OCI-LY7 (cell line): ENCODE measurements at regions of chr13 and their contacts with region 1.

Region 1: GRCh38 chr13:33542283-33543088 is 256.9 kb upstream of the STARD13 start:
- DNase-seq: peak; percentile 98
- H3K4me3 ChIP-seq: peak overlapping the region; percentile 80
- H3K27ac ChIP-seq: peak overlapping the region; percentile 98
- H3K4me1 ChIP-seq: peaks cover 58% of the 10 kb centered on the region
- CTCF ChIP-seq: peak; percentile 83

Region 2: DNA sequence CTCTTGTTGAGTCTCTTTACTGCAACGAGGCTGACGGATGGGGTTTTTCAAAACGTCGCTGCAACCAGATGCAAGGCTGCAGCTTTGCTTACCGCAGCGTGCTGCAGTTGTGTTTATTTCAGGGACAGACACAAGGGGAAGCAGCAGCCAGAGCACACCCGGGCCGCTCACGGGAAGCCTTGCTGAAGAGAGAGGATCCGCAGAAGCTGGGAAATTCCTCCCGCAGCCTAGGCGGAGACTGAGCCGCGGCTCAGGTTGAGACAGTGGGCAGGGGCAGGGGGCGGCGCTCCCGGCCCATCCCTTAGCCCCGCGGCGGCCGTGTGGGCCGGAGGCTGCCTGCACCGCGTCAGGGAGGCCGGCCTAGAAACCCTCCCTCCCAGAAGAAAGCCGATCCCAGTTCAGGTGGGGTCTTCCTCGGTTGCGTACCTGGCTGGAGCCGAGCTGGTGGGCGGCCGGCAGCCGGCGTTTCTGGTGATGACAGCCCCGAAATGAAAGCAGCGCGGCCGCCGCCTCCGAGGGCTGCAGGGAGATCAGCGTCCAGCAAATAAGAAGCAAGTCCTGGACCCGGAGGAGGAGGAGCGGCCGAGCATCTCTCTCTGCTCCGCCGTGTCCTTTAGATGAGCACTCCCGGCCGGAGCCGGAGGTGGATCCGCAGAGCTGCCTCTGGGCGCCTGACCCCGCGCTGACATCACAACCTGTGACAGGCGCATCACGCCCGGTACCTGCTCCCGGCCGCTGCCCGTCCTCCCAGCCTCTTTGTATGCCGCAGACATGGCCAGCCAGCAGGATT is 1511.3 kb before region 1 on chr13 and contains the start of gene FRY:
- CTCF ChIA-PET with region 1: no interaction called
- POLR2A ChIA-PET with region 1: no interaction called
- intact Hi-C with region 1: loop called (anchors 10 kb)
- DNase-seq: peak; percentile 49
- H3K4me3 ChIP-seq: peak within 1 kb of the TSS; percentile 70
- H3K27ac ChIP-seq: no peak within 1 kb of the TSS
- H3K4me1 ChIP-seq: peaks cover 9% of the 10 kb centered on the region
- CTCF ChIP-seq: no peak
- total RNA-seq, gene FRY: 3.0 and 7.1 TPM in 2 replicates

Region 3: GRCh38 chr13:32586080-32586900 is 956.2 kb before region 1 on chr13 and contains the start of gene PDS5B:
- CTCF ChIA-PET with region 1: no interaction called
- POLR2A ChIA-PET with region 1: no interaction called
- intact Hi-C with region 1: loop called (anchors 1 kb)
- DNase-seq: peak; percentile 95
- H3K4me3 ChIP-seq: peak within 1 kb of the TSS; percentile 91
- H3K27ac ChIP-seq: peak within 1 kb of the TSS; percentile 81
- H3K4me1 ChIP-seq: peaks cover 32% of the 10 kb centered on the region
- CTCF ChIP-seq: peak; percentile 84
- total RNA-seq, gene PDS5B: 34.1 and 41.2 TPM in 2 replicates

Region 4: DNA sequence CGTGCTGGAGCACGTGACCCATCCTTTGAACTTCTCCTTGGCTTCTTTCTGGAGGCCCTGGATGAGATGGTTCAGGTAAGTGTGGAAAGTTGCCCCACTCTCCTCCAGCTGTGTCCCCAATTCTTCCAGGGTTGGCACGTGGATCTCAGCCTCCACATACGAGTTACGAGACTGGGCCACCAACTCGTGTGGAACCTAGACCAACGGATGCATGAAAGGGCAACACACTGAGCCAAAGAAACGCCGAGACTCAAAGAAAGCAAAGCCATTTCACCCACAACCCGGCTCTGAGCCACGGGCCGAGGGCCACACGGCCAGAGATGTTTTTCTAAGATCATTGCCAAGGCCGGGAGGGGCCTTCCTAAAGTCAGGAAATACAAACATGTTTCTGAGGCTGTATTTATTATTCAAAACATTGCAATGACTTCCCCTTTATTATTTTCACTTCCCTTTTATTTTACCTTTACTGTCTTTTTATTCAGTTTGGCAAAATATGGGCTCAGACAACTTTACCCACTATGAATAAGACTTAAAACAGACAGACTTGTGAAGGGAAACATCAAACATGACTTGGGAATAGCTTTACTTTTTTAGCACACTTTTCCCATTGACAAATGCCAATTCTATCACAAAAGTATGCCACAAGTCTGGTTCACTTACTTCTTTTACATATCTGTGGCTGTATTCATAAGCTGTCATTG is 431.6 kb before region 1 on chr13:
- CTCF ChIA-PET with region 1: no interaction called
- POLR2A ChIA-PET with region 1: no interaction called
- intact Hi-C with region 1: loop called (anchors 2 kb)
- DNase-seq: peak; percentile 32
- H3K4me3 ChIP-seq: no peak overlapping the region
- H3K27ac ChIP-seq: no peak overlapping the region
- H3K4me1 ChIP-seq: peaks cover 15% of the 10 kb centered on the region
- CTCF ChIP-seq: no peak

Region 5: DNA sequence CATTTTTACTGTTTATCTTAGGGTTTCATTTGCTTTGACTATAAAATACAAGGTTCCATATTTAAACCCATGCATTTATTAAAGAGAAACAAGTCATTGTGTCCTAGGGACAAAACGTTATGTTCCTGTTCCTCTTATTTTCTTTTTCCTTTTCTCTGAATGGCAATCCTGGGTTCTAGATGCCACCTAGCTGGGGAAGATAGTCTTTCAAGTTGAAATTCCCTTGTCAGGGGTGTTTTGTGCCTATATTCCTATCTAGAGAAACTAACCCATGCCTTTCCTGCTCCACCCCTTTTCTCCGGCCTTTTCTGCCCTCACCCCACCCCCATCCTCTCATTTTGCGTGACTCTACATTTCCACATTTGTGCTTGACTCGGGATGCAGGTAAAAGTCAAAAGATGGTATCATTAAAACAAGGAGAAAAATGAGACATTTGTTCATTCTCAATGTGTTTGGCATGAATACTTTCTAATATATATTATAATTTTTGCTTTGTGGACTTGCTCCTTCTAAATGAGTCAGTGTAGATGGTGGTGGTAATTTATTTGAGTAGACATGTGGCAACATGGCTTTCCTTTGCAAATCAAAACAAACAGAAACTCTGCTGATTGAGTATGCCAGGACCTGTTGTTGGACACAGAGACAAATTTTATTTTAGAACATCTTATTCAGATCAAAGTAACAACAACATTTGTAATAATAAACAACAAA is 230.2 kb before region 1 on chr13:
- CTCF ChIA-PET with region 1: no interaction called
- POLR2A ChIA-PET with region 1: no interaction called
- intact Hi-C with region 1: no loop called
- DNase-seq: no peak
- H3K4me3 ChIP-seq: no peak overlapping the region
- H3K27ac ChIP-seq: no peak overlapping the region
- H3K4me1 ChIP-seq: no peaks in the 10 kb centered on the region
- CTCF ChIP-seq: no peak

Region 6: GRCh38 chr13:33615436-33615835 is 73.0 kb after region 1 on chr13:
- CTCF ChIA-PET with region 1: no interaction called
- POLR2A ChIA-PET with region 1: no interaction called
- intact Hi-C with region 1: no loop called
- DNase-seq: no peak
- H3K4me3 ChIP-seq: no peak overlapping the region
- H3K27ac ChIP-seq: no peak overlapping the region
- H3K4me1 ChIP-seq: no peaks in the 10 kb centered on the region
- CTCF ChIP-seq: no peak

Region 7: GRCh38 chr13:33723772-33724435 is 181.4 kb after region 1 on chr13:
- CTCF ChIA-PET with region 1: interaction called, 5 read pairs
- POLR2A ChIA-PET with region 1: interaction called, 37 read pairs
- intact Hi-C with region 1: loop called (anchors 1 kb)
- DNase-seq: peak; percentile 91
- H3K4me3 ChIP-seq: no peak overlapping the region
- H3K27ac ChIP-seq: peak overlapping the region; percentile 24
- H3K4me1 ChIP-seq: peaks cover 54% of the 10 kb centered on the region
- CTCF ChIP-seq: peak; percentile 91

Region 8: DNA sequence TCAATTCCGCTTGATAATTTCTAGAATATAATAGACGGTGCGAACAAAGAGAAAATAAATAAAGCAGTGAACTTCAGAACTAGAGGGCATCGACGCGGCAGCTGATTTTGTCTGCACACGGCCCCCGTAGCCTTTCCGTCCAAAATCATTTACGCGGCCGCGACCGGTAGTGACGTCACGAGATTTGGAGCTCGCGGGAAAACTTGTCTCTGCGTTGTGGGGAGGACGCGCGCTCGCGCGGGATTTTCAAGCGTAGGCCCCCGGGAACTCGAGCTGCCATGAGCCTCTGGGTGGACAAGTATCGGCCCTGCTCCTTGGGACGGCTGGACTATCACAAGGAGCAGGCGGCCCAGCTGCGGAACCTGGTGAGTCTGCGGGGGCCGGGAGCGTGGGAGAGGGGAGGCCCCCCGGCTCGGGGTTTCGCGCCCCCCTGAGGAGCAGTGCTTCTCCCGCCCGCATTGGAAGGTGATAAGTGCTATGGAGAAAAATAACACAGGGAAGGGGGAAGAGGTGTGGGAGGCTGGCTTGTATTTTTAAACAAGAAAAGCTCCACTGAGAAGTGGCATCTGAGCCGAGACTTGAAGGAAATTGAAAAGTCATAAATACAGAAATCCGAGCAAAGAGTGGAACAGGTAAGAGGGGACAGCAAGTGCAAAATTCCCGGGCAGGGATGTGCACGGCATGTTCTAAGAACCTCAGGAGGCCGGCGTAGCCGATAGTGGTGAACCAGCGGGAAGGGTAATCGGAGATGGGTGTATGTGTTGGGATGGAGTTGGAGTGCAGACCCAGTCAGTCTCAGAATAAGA is 275.6 kb after region 1 on chr13 and contains the start of gene RFC3:
- CTCF ChIA-PET with region 1: no interaction called
- POLR2A ChIA-PET with region 1: interaction called, 4 read pairs
- intact Hi-C with region 1: loop called (anchors 1 kb)
- DNase-seq: peak; percentile 97
- H3K4me3 ChIP-seq: peak within 1 kb of the TSS; percentile 98
- H3K27ac ChIP-seq: peak within 1 kb of the TSS; percentile 76
- H3K4me1 ChIP-seq: peaks cover 59% of the 10 kb centered on the region
- CTCF ChIP-seq: peak; percentile 51; the same call in 1 of the 2 replicates
- total RNA-seq, gene RFC3: 97.6 and 108 TPM in 2 replicates